ENCODE measurements at regions of chr9 and their contacts with region 1.

Region 1: GRCh38 chr9:70043689-70044489 is at the start of gene MAMDC2:
- DNase-seq: no peak
- H3K4me3 ChIP-seq: peak within 1 kb of the TSS; percentile 56 to 64
- H3K27ac ChIP-seq: peak within 1 kb of the TSS; percentile 84
- H3K4me1 ChIP-seq: peaks cover 61% of the 10 kb centered on the region
- H3K27me3 ChIP-seq: no peaks in the 10 kb centered on the region
- CTCF ChIP-seq: no peak
- POLR2A ChIP-seq: no peak
- total RNA-seq, gene MAMDC2: 38.5 TPM

Region 2: GRCh38 chr9:69996967-69997366 is 46.9 kb before region 1 on chr9:
- intact Hi-C with region 1: loop called (anchors 10 kb)
- DNase-seq: no peak
- H3K4me3 ChIP-seq: no peak overlapping the region
- H3K27ac ChIP-seq: peak overlapping the region; percentile 48
- H3K4me1 ChIP-seq: peaks cover 30% of the 10 kb centered on the region
- H3K27me3 ChIP-seq: no peaks in the 10 kb centered on the region
- CTCF ChIP-seq: no peak
- POLR2A ChIP-seq: no peak

Region 3: DNA sequence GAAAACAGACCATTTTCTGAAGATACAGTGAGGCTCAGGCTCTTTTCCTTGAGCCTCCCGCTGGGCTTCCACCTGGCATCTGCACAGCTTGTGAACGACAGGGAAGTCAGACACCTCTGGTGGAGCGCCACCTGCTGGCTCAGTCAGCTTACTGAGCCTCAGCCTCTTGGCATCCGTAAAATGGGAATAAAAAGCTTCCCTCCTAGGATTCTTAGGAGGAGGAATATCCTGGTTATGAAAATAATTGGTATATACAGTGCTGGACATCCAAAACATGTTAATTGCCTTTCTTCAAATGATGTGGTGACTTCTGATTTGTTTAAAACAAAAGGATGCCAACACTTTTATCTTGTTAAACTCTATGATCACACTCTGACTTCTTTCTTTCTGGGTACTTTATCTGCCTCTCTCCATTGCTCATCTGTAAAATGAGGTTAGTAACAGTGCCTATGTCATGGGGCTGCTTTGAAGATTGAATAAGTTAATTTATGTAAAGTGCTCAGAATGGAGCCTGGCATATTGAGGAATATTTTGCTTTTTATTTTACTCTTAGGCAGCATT is 67.2 kb after region 1 on chr9:
- intact Hi-C with region 1: loop called (anchors 10 kb)
- DNase-seq: peak in 1 of 2 donors; percentile 84
- H3K4me3 ChIP-seq: no peak overlapping the region
- H3K27ac ChIP-seq: no peak overlapping the region
- H3K4me1 ChIP-seq: peaks cover 8% of the 10 kb centered on the region
- H3K27me3 ChIP-seq: no peaks in the 10 kb centered on the region
- CTCF ChIP-seq: peak; percentile 58 to 89 (median 82)
- POLR2A ChIP-seq: no peak